ENCODE measurements at regions of chr3 and their contacts with region 1.

Region 1: GRCh38 chr3:166291186-166291959 is 454.1 kb upstream of the BCHE start:
- DNase-seq: no peak
- ATAC-seq: peak; percentile 47; the same call in 1 of the 2 replicates
- H3K4me3 ChIP-seq: no peak overlapping the region
- H3K27ac ChIP-seq: no peak overlapping the region
- H3K4me1 ChIP-seq: no peaks in the 10 kb centered on the region
- H3K27me3 ChIP-seq: no peaks in the 10 kb centered on the region
- CTCF ChIP-seq: no peak
- POLR2A ChIP-seq: no peak
- RAD21 ChIP-seq: no peak

Region 2: GRCh38 chr3:165981318-165981717 is 310.1 kb before region 1 on chr3:
- CTCF ChIA-PET with region 1: no interaction called
- POLR2A ChIA-PET with region 1: no interaction called
- RAD21 ChIA-PET with region 1: no interaction called
- intact Hi-C with region 1: no loop called
- DNase-seq: no peak
- ATAC-seq: no peak
- H3K4me3 ChIP-seq: no peak overlapping the region
- H3K27ac ChIP-seq: no peak overlapping the region
- H3K4me1 ChIP-seq: no peaks in the 10 kb centered on the region
- H3K27me3 ChIP-seq: no peaks in the 10 kb centered on the region
- CTCF ChIP-seq: no peak
- POLR2A ChIP-seq: no peak
- RAD21 ChIP-seq: no peak

Region 3: DNA sequence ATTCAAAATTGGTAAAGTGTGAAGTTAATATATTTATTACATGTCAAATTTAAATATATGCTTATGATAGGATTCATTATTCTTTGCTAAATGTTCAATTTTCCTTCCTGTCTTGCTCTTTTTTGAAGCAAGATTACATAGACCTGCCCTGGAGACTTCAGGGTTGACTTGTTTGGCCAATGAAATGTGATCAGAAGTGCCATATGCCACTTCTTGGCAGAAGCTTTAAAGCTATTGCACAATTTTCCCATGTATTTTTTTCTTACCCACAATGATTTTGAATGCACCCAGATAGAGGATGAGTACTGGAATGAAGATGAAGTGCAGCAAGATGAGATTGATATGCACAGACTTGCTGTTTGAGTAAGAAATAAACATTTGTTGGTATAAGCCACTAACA is 47.9 kb before region 1 on chr3:
- CTCF ChIA-PET with region 1: no interaction called
- POLR2A ChIA-PET with region 1: no interaction called
- RAD21 ChIA-PET with region 1: no interaction called
- intact Hi-C with region 1: loop called (anchors 10 kb)
- DNase-seq: no peak
- ATAC-seq: no peak
- H3K4me3 ChIP-seq: no peak overlapping the region
- H3K27ac ChIP-seq: no peak overlapping the region
- H3K4me1 ChIP-seq: no peaks in the 10 kb centered on the region
- H3K27me3 ChIP-seq: no peaks in the 10 kb centered on the region
- CTCF ChIP-seq: no peak
- POLR2A ChIP-seq: no peak
- RAD21 ChIP-seq: no peak